Activated T-helper 1 cell treated with anti-CD3 and anti-CD28 coated beads, Interleukin-12 subunit alpha, Interleukin-12 subunit beta, Interleukin-2, Interleukin-4 antibody, amounts not matched to agents 30 ng/mL and 10 ng/mL and 1 ng/mL, durations not matched to agents 14 hours and 24 hours and 36 hours (primary cell): ENCODE measurements at regions of chr2 and their contacts with region 1.

Region 1: GRCh38 chr2:233061591-233062450 is 1.7 kb downstream of the INPP5D start:
- DNase-seq: no peak
- H3K4me3 Mint-ChIP-seq: peak overlapping the region; percentile 97
- H3K27ac Mint-ChIP-seq: peak overlapping the region; percentile 99
- H3K4me1 Mint-ChIP-seq: peaks cover 51% of the 10 kb centered on the region
- H3K27me3 Mint-ChIP-seq: no peaks in the 10 kb centered on the region

Region 2: DNA sequence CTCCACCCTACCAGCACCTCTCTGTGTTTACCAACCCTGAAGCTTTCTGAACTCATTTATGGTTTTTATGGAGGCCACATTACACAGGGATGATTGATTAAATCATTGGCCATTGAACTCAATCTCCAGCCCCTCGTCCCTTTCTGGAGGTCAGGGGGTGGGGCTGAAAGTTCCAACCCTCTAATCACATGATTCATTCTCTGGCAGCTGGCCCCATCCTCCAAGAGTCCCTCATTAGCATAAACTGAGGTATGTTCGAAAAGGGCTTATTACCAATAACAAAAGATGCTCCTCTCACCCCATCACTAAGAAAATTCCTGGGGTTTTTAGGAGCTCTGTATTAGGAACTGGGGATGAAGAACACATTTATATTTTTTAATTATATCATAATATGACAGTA is 1008.0 kb before region 1 on chr2:
- intact Hi-C with region 1: no loop called
- DNase-seq: no peak
- H3K4me3 Mint-ChIP-seq: no peak overlapping the region
- H3K27ac Mint-ChIP-seq: no peak overlapping the region
- H3K4me1 Mint-ChIP-seq: peaks cover 10% of the 10 kb centered on the region
- H3K27me3 Mint-ChIP-seq: peaks cover 4% of the 10 kb centered on the region

Region 3: GRCh38 chr2:232697100-232697865 is 364.5 kb before region 1 on chr2 and contains the start of gene GIGYF2:
- intact Hi-C with region 1: loop called (anchors 2 kb)
- DNase-seq: peak; percentile 90
- H3K4me3 Mint-ChIP-seq: peak within 1 kb of the TSS; percentile 99
- H3K27ac Mint-ChIP-seq: peak within 1 kb of the TSS; percentile 87
- H3K4me1 Mint-ChIP-seq: peaks cover 30% of the 10 kb centered on the region
- H3K27me3 Mint-ChIP-seq: no peaks in the 10 kb centered on the region
- total RNA-seq, gene GIGYF2: 71.1 and 74.6 TPM in 2 replicates

Region 4: GRCh38 chr2:232761301-232761907 is 300.4 kb before region 1 on chr2:
- intact Hi-C with region 1: loop called (anchors 2 kb)
- DNase-seq: peak; percentile 12
- H3K4me3 Mint-ChIP-seq: no peak overlapping the region
- H3K27ac Mint-ChIP-seq: no peak overlapping the region
- H3K4me1 Mint-ChIP-seq: peaks cover 31% of the 10 kb centered on the region
- H3K27me3 Mint-ChIP-seq: no peaks in the 10 kb centered on the region

Region 5: GRCh38 chr2:233075966-233076339 is 14.1 kb after region 1 on chr2:
- intact Hi-C with region 1: loop called (anchors 1 kb)
- DNase-seq: no peak
- H3K4me3 Mint-ChIP-seq: no peak overlapping the region
- H3K27ac Mint-ChIP-seq: no peak overlapping the region
- H3K4me1 Mint-ChIP-seq: peaks cover 27% of the 10 kb centered on the region
- H3K27me3 Mint-ChIP-seq: no peaks in the 10 kb centered on the region

Region 6: DNA sequence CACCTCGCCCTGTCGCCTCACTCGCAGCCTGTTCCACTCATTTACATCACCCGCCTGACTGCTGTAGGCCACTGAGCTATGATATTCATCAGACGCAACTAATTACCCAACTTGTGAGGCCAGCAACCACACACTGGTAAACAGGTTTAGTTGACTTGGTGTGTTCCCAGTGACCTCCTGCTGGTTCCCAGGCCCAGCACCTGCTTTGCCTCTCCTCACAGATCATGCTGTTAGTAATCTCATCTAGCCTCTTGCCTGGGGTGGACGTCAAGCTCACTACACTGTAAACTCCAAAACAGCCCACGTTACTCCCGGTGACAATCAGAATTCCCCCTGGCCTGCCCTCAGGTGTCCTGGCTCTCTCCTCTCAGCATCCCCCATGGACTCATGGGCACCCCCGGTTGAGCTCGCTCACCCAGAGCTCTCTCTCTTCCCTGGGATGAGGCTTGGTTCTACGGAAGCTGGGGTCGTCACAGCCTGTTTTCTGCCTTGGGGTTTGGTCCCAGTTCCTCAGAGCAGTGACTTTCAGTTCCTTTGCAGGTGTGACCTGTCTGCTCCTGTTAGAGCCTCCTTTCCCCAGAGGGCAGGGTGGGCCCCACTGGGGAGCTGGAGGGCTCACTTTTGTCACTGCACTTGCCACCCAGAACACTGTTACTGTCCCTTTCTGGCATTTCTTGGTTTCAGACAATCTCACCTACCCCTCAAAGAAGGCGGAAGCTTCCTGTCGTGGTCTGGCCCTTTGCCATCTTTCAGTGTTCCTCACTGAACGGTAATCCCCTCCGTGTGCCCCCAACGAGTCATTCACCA is 38.6 kb after region 1 on chr2:
- intact Hi-C with region 1: loop called (anchors 2 kb)
- DNase-seq: no peak
- H3K4me3 Mint-ChIP-seq: peak overlapping the region; percentile 40
- H3K27ac Mint-ChIP-seq: peak overlapping the region; percentile 69
- H3K4me1 Mint-ChIP-seq: peaks cover 63% of the 10 kb centered on the region
- H3K27me3 Mint-ChIP-seq: no peaks in the 10 kb centered on the region

Region 7: DNA sequence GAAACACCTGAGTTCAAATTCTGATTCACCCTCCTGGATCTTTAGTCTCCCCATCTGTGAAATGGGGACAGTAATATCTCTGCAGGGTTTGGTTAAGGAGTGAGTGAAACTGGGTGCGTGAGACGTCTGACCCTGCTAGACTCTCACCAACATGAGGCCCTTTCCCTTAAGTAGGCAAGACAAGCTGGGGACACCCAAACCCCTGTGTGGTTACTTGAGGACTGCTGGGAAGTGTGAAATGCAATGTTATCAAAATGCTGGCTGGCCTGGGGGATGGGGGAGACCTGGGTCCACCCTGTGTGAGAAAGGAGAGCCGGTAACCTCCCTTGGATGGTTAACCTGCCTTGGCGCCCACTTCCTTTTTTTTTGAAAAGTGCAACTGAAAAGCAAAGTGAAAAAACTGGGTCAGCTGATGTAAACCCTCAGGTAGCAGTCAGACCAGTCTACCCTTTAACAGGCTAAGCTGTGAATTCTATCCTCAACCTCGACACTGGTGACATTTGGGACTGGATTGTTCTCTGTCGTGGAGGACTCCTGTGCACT is 80.6 kb after region 1 on chr2:
- intact Hi-C with region 1: loop called (anchors 2 kb)
- DNase-seq: peak; percentile 16
- H3K4me3 Mint-ChIP-seq: no peak overlapping the region
- H3K27ac Mint-ChIP-seq: peak overlapping the region; percentile 73
- H3K4me1 Mint-ChIP-seq: peaks cover 41% of the 10 kb centered on the region
- H3K27me3 Mint-ChIP-seq: no peaks in the 10 kb centered on the region

Region 8: GRCh38 chr2:233152541-233152940 is 90.7 kb after region 1 on chr2:
- intact Hi-C with region 1: no loop called
- DNase-seq: no peak
- H3K4me3 Mint-ChIP-seq: no peak overlapping the region
- H3K27ac Mint-ChIP-seq: peak overlapping the region; percentile 9
- H3K4me1 Mint-ChIP-seq: no peaks in the 10 kb centered on the region
- H3K27me3 Mint-ChIP-seq: no peaks in the 10 kb centered on the region

Region 9: DNA sequence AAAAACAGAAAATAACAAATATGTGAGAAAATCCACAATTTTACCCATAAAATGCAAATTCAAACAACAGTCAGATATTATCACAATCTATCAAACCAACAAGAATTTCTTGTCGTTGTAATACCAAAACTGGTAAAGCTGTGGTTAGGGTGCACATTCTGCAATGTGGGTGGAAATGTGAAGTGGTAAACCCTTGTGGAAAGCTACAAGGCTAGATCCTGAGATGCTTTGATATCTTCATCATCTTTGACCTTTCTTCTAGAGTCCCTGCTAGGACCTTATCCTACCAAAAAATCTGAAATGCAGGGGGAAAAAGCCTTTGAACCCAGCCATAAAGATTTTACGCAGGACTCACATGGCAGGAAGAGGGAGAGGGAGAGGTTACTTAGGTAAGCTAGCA is 172.4 kb after region 1 on chr2:
- intact Hi-C with region 1: loop called (anchors 2 kb)
- DNase-seq: peak; percentile 8
- H3K4me3 Mint-ChIP-seq: peak overlapping the region; percentile 43
- H3K27ac Mint-ChIP-seq: peak overlapping the region; percentile 86
- H3K4me1 Mint-ChIP-seq: peaks cover 62% of the 10 kb centered on the region
- H3K27me3 Mint-ChIP-seq: no peaks in the 10 kb centered on the region